Left ventricle myocardium inferior (tissue), 1 donor: ENCODE measurements at regions of chr1 and their contacts with region 1.

Region 1: GRCh38 chr1:197614916-197615692 is 160.2 kb downstream of the DENND1B start:
- DNase-seq: no peak
- H3K4me3 ChIP-seq: no peak overlapping the region
- H3K27ac ChIP-seq: no peak overlapping the region
- H3K4me1 ChIP-seq: peaks cover 26% of the 10 kb centered on the region
- H3K27me3 ChIP-seq: no peaks in the 10 kb centered on the region
- CTCF ChIP-seq: peak; percentile 72

Region 2: DNA sequence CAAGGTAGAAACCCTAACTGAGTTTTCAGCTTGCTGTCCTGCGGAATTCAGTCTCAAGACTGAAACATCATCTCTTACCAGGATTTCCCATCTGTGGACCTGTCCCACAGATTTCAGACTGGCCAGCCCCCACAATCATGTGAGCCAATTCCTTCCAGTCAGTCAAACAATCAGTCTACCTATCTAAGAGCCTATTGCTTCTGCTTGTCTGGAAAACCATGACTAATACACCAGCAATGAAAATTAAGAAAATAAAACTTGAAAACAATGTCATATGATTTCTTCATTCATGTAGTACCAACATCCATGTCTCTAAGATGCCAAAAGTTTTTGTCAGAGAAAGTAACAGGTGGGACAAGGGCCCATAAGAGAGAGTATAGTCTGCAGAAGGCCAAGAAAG is 404.7 kb before region 1 on chr1:
- intact Hi-C with region 1: no loop called
- DNase-seq: no peak
- H3K4me3 ChIP-seq: no peak overlapping the region
- H3K27ac ChIP-seq: no peak overlapping the region
- H3K4me1 ChIP-seq: no peaks in the 10 kb centered on the region
- H3K27me3 ChIP-seq: no peaks in the 10 kb centered on the region
- CTCF ChIP-seq: no peak

Region 3: GRCh38 chr1:197868751-197869489 is 253.8 kb after region 1 on chr1:
- intact Hi-C with region 1: loop called (anchors 5 kb)
- DNase-seq: no peak
- H3K4me3 ChIP-seq: no peak overlapping the region
- H3K27ac ChIP-seq: no peak overlapping the region
- H3K4me1 ChIP-seq: no peaks in the 10 kb centered on the region
- H3K27me3 ChIP-seq: no peaks in the 10 kb centered on the region
- CTCF ChIP-seq: peak; percentile 74

Region 4: GRCh38 chr1:197924516-197925123 is 309.5 kb after region 1 on chr1:
- intact Hi-C with region 1: loop called (anchors 10 kb)
- DNase-seq: no peak
- H3K4me3 ChIP-seq: no peak overlapping the region
- H3K27ac ChIP-seq: no peak overlapping the region
- H3K4me1 ChIP-seq: peaks cover 5% of the 10 kb centered on the region
- H3K27me3 ChIP-seq: peaks cover 100% of the 10 kb centered on the region
- CTCF ChIP-seq: peak; percentile 78